ENCODE measurements at regions of chr2 and their contacts with region 1.

Region 1: GRCh38 chr2:102442967-102443828 is 20.2 kb downstream of the IL18RAP start:
- DNase-seq: no peak
- ATAC-seq: no peak
- H3K4me3 ChIP-seq: no peak overlapping the region
- H3K27ac ChIP-seq: no peak overlapping the region
- H3K4me1 ChIP-seq: no peaks in the 10 kb centered on the region
- H3K27me3 ChIP-seq: no peaks in the 10 kb centered on the region
- CTCF ChIP-seq: peak in 4 of 5 experiments; percentile 7 to 60 (median 39)
- POLR2A ChIP-seq: no peak

Region 2: DNA sequence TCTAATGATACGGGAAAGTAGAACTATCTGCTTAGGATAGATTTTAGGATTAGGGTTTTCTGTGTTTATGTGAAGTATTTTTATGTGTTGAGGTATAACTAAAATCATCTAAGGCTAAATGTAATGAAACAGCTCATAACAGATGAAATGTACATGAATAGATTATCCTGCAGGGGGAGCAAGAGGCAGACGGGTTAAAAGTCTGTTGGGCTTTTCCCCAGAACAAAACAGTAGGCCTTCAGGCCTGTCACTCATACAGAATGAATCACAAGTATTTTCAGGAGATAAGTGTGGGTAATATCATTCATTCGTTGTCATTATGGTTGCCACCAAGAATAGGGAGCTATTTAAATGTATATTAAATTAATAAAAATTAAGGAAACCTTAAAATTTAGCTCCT is 559.3 kb before region 1 on chr2:
- in situ Hi-C with region 1: no loop called
- intact Hi-C with region 1: loop called (anchors 10 kb)
- DNase-seq: no peak
- ATAC-seq: peak; percentile 53 to 81
- H3K4me3 ChIP-seq: no peak overlapping the region
- H3K27ac ChIP-seq: no peak overlapping the region
- H3K4me1 ChIP-seq: peaks cover 0 to 16% of the 10 kb centered on the region in 2 donors
- H3K27me3 ChIP-seq: no peaks in the 10 kb centered on the region
- CTCF ChIP-seq: peak; percentile 33 to 47 (median 41)
- POLR2A ChIP-seq: no peak

Region 3: GRCh38 chr2:101983928-101984327 is 459.3 kb before region 1 on chr2:
- in situ Hi-C with region 1: loop called in 1 of 4 experiments (anchors 25 kb)
- intact Hi-C with region 1: no loop called
- DNase-seq: no peak
- ATAC-seq: peak in 1 of 2 donors; percentile 51
- H3K4me3 ChIP-seq: no peak overlapping the region
- H3K27ac ChIP-seq: no peak overlapping the region
- H3K4me1 ChIP-seq: no peaks in the 10 kb centered on the region
- H3K27me3 ChIP-seq: no peaks in the 10 kb centered on the region
- CTCF ChIP-seq: peak in 2 of 5 experiments; percentile 5 to 25
- POLR2A ChIP-seq: no peak

Region 4: GRCh38 chr2:102251042-102251848 is 192.0 kb before region 1 on chr2:
- in situ Hi-C with region 1: loop called in 1 of 4 experiments (anchors 10 kb)
- intact Hi-C with region 1: no loop called
- DNase-seq: peak in 1 of 2 donors; percentile 44
- ATAC-seq: peak; percentile 48 to 66
- H3K4me3 ChIP-seq: peak overlapping the region; percentile 34 to 54 (median 42)
- H3K27ac ChIP-seq: peak overlapping the region in 1 of 4 donors; percentile 2
- H3K4me1 ChIP-seq: peaks cover under 1 to 4% of the 10 kb centered on the region in 2 donors
- H3K27me3 ChIP-seq: peaks cover 0 to 16% (median 0%) of the 10 kb centered on the region in 3 donors
- CTCF ChIP-seq: peak; percentile 42 to 64 (median 56)
- POLR2A ChIP-seq: no peak

Region 5: DNA sequence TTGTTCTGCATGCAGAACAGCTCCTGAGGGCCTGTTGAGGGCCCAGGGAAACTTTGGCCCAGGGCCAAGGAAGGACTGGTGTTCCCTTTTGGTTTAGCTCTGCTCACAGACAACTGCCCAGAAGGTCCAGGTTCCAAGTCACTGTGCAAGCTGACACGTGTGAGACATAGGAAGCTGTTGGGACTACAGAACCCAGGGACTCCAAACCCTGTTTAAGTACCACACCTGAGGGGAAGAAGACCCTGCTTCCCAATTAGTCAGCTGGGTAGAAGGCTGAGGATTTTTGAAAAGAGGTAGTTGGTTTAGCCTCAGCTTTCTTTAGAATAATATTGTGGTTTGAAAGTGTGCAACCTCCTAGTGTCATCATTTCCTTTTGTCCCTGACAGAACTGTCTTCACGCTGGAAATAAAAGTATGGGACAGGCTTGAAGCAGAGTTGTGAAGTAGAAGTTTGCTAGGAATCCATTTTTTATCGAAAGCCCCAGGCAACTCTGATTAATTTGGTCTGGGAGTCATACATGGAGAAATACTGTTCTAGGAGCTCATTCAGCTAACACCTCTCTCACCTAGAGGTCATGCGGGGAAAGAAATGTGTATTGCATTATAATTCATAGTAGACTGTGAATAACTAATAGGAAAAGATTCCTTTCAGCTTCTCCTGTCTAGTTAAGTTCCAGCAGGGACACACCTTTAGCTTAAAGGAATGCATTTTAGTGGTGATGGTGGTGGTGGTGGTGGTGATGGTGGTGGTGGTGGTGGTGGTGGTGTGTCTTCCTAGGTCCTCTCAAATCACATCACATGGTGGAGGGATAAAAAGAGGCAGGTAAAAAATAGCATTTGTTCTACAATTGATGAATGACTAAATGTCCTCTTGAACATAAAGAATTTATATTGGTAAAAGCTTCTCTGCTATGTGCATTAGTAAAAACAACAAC is 151.6 kb before region 1 on chr2:
- in situ Hi-C with region 1: loop called in 1 of 4 experiments (anchors 25 kb)
- intact Hi-C with region 1: no loop called
- DNase-seq: no peak
- ATAC-seq: no peak
- H3K4me3 ChIP-seq: no peak overlapping the region
- H3K27ac ChIP-seq: no peak overlapping the region
- H3K4me1 ChIP-seq: no peaks in the 10 kb centered on the region
- H3K27me3 ChIP-seq: no peaks in the 10 kb centered on the region
- CTCF ChIP-seq: no peak
- POLR2A ChIP-seq: no peak

Region 6: GRCh38 chr2:102686479-102687439 is 243.6 kb after region 1 on chr2:
- in situ Hi-C with region 1: no loop called
- intact Hi-C with region 1: no loop called
- DNase-seq: no peak
- ATAC-seq: no peak
- H3K4me3 ChIP-seq: no peak overlapping the region
- H3K27ac ChIP-seq: no peak overlapping the region
- H3K4me1 ChIP-seq: no peaks in the 10 kb centered on the region
- H3K27me3 ChIP-seq: no peaks in the 10 kb centered on the region
- CTCF ChIP-seq: no peak
- POLR2A ChIP-seq: no peak

Measured in gastrocnemius medialis (tissue), 4 donors.